Naive thymus-derived CD4-positive, alpha-beta T cell (primary cell): ENCODE measurements at regions of chr15 and their contacts with region 1.

Region 1: DNA sequence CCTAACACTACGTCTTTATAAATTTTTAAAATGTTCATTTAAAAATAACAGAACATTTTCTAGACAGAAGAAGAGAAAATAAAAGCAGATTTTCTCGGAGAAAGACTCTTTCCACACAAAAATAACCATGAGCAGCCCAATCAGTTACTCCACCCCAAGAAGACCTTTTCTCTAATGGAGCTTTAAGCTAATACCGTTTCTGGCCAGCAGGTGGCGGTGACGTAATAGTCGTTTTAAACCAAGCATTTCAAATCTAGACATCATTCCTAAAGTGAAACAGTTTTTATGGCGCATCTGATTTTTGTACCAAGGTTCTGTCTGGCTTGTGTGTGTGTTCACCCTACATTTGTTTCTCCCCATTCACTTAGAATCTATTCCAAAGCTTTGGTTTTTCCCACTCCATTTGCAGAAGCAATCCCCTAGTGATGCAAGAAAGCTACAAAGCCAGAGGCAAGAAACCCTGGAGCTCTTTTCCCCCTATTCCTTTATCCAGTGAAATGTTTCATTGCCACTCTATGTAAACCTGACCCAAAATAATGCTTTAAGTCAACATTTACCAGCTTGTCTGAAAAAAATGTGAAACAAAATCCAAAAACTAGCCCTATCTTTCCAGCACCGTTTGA is 336.7 kb upstream of the IGF1R start:
- DNase-seq: peak; percentile 11 to 68 (median 42)
- ATAC-seq: peak; percentile 57
- H3K4me3 ChIP-seq: no peak overlapping the region
- H3K4me3 Mint-ChIP-seq: peak overlapping the region in 1 of 10 donors; percentile 40
- H3K27ac ChIP-seq: no peak overlapping the region
- H3K27ac Mint-ChIP-seq: no peak overlapping the region
- H3K4me1 ChIP-seq: no peaks in the 10 kb centered on the region
- H3K4me1 Mint-ChIP-seq: peaks cover 0 to 6% (median 0%) of the 10 kb centered on the region in 7 donors
- H3K27me3 ChIP-seq: no peaks in the 10 kb centered on the region
- H3K27me3 Mint-ChIP-seq: peaks cover 6 to 48% (median 36%) of the 10 kb centered on the region in 5 donors

Region 2: DNA sequence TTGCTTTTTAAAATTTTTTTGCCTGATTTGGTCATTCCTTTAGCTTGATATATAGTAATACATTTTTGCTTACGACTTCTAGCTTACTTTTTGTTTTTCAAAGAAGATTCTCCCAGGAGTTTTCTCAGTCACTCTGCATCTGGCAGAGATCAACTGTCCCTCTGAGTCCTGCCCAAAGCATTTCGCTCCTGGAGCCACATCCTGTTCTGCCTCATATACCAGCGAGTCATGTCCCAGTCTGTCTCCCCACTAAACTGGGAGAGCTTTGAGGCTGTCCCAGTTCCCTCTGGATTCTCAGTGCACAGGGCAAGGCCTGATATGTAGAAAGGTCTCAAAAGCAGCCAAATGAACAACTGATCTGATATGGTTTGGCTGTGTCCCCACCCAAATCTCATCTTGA is 24.8 kb before region 1 on chr15:
- CTCF ChIA-PET with region 1: no interaction called
- POLR2A ChIA-PET with region 1: no interaction called
- intact Hi-C with region 1: no loop called
- DNase-seq: no peak
- ATAC-seq: no peak
- H3K4me3 ChIP-seq: no peak overlapping the region
- H3K4me3 Mint-ChIP-seq: no peak overlapping the region
- H3K27ac ChIP-seq: no peak overlapping the region
- H3K27ac Mint-ChIP-seq: no peak overlapping the region
- H3K4me1 ChIP-seq: no peaks in the 10 kb centered on the region
- H3K4me1 Mint-ChIP-seq: no peaks in the 10 kb centered on the region
- H3K27me3 ChIP-seq: no peaks in the 10 kb centered on the region
- H3K27me3 Mint-ChIP-seq: peaks cover 0 to 81% (median 42%) of the 10 kb centered on the region in 5 donors

Region 3: GRCh38 chr15:98382139-98382538 is 70.5 kb after region 1 on chr15:
- CTCF ChIA-PET with region 1: no interaction called
- POLR2A ChIA-PET with region 1: no interaction called
- intact Hi-C with region 1: no loop called
- DNase-seq: no peak
- ATAC-seq: no peak
- H3K4me3 ChIP-seq: no peak overlapping the region
- H3K4me3 Mint-ChIP-seq: no peak overlapping the region
- H3K27ac ChIP-seq: no peak overlapping the region
- H3K27ac Mint-ChIP-seq: no peak overlapping the region
- H3K4me1 ChIP-seq: no peaks in the 10 kb centered on the region
- H3K4me1 Mint-ChIP-seq: no peaks in the 10 kb centered on the region
- H3K27me3 ChIP-seq: peaks cover 0 to 5% of the 10 kb centered on the region in 2 donors
- H3K27me3 Mint-ChIP-seq: peaks cover 12 to 50% (median 42%) of the 10 kb centered on the region in 5 donors

Region 4: DNA sequence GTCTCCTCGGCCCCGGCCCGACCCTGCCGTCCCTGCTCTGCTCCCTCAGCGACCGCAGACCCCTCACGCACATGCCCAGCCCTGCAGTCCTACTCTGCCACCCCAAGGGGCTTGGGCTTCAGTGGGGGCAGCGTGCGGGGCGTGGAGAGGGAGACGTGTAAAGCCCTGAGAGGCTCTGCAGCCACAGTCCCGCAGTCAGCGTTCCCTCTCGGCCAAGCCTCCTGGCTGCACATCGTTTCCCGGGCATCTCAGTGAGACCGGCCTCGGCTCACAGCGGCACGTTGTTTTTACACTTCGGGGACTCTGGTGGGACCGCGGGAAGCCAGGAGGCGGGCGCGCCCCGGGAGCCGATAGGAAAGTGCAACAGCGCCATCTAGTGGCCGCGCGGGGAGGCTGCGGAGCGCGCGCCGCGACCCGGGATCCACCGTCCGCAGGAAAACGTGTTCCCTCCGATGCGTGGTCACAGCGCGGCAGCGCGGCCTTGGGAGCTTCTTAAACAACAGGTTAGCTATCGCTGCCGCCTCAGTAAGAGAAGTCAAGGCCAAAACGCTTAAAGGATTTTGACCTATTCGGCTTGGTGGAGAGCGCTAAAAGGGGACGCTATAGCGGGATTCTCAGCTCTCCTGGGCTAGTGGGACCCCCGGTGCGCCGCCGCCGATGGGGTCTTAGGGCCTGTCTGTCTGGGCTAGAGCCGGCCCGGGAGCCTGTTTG is 109.9 kb after region 1 on chr15:
- CTCF ChIA-PET with region 1: interaction called, 5 read pairs
- POLR2A ChIA-PET with region 1: interaction called, 5 read pairs
- intact Hi-C with region 1: loop called (anchors 1 kb)
- DNase-seq: peak; percentile 17 to 77 (median 48)
- ATAC-seq: peak; percentile 64
- H3K4me3 ChIP-seq: no peak overlapping the region
- H3K4me3 Mint-ChIP-seq: peak overlapping the region in 7 of 10 donors; percentile 18 to 73 (median 55)
- H3K27ac ChIP-seq: no peak overlapping the region
- H3K27ac Mint-ChIP-seq: no peak overlapping the region
- H3K4me1 ChIP-seq: peaks cover 0 to 6% of the 10 kb centered on the region in 2 donors
- H3K4me1 Mint-ChIP-seq: peaks cover 0 to 17% (median 6%) of the 10 kb centered on the region in 7 donors
- H3K27me3 ChIP-seq: peaks cover 0 to 5% of the 10 kb centered on the region in 2 donors
- H3K27me3 Mint-ChIP-seq: peaks cover 42 to 81% (median 52%) of the 10 kb centered on the region in 5 donors

Region 5: DNA sequence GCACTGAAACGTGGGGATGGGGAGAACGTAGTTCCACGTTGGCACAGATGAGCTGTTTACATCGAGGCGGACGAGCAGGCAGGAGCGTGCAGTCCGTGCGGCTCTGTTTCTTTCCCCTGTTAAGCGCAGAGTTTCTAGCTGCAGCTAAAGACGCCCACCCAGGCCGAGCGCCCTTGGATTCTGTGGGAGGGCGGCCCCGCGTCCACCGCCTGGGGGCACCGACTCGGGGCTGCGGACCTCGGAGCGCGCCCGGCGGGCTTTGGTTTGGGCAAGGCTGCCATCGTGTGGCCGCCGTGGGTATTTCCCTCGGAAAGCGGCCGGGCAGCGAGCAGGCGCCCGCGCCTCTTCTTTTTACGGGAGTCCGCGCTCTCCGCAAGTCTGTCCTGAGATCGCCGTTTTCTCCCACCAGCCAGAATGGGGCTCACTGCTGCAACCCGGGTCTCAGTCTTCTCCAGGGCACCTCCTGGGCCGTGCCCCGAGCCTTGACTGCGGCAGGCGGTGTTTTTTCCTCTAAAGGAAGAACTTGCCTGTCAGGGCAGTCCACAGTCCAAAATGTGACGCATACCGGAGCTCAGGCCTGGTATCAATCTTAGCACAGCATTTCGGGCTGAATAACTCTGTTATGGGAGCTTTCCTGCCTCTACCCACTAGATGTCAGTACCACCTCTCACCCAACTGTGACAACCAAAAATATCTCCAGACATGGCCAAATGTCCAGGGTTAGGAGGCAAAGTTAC is 116.7 kb after region 1 on chr15:
- CTCF ChIA-PET with region 1: interaction called, 17 read pairs
- POLR2A ChIA-PET with region 1: interaction called, 5 read pairs
- intact Hi-C with region 1: loop called (anchors 2 kb)
- DNase-seq: peak in 8 of 9 donors; percentile 10 to 77 (median 50)
- ATAC-seq: peak; percentile 80
- H3K4me3 ChIP-seq: no peak overlapping the region
- H3K4me3 Mint-ChIP-seq: peak overlapping the region; percentile 45 to 72 (median 60)
- H3K27ac ChIP-seq: no peak overlapping the region
- H3K27ac Mint-ChIP-seq: no peak overlapping the region
- H3K4me1 ChIP-seq: no peaks in the 10 kb centered on the region
- H3K4me1 Mint-ChIP-seq: peaks cover 0 to 16% (median 4%) of the 10 kb centered on the region in 7 donors
- H3K27me3 ChIP-seq: peaks cover 0 to 15% of the 10 kb centered on the region in 2 donors
- H3K27me3 Mint-ChIP-seq: peaks cover 38 to 77% (median 64%) of the 10 kb centered on the region in 5 donors